Endothelial cell of umbilical vein (primary cell): ENCODE measurements at regions of chr1 and their contacts with region 1.

Region 1: GRCh38 chr1:81800695-81801650 is at the start of gene ADGRL2:
- DNase-seq: peak; percentile 91
- H3K4me3 ChIP-seq: peak within 1 kb of the TSS; percentile 71 to 99 (median 89)
- H3K27ac ChIP-seq: peak within 1 kb of the TSS; percentile 79
- H3K4me1 ChIP-seq: peaks cover 10% of the 10 kb centered on the region
- H3K27me3 ChIP-seq: no peaks in the 10 kb centered on the region
- CTCF ChIP-seq: no peak
- POLR2A ChIP-seq: no peak
- total RNA-seq, gene ADGRL2: 40.0 and 46.1 TPM in 2 replicates

Region 2: GRCh38 chr1:81414488-81415015 is 386.4 kb before region 1 on chr1:
- CTCF ChIA-PET with region 1: interaction called, 5 read pairs
- POLR2A ChIA-PET with region 1: no interaction called
- dilution Hi-C with region 1: no loop called
- intact Hi-C with region 1: loop called (anchors 1 kb)
- DNase-seq: peak; percentile 66
- H3K4me3 ChIP-seq: no peak overlapping the region
- H3K27ac ChIP-seq: no peak overlapping the region
- H3K4me1 ChIP-seq: peaks cover 8% of the 10 kb centered on the region
- H3K27me3 ChIP-seq: no peaks in the 10 kb centered on the region
- CTCF ChIP-seq: peak; percentile 80
- POLR2A ChIP-seq: no peak

Region 3: DNA sequence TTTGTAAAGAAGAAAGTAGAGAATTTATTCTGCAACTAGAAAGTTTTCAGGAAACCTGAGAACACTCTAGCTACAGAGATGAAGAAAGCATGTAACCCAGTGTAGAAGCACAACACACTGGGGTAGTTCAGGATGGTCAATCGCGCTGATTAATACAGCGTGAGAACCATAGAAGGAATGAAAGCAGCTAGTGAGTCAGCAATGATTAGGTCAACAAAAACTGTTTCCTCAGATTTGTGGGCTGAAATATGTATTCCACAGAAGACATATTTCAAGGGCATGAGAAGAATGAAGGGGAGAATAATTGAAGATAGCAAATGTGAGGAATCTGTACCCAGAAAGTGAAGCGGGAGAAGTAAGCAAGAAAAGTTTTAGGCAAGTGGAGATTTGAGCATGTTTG is 98.1 kb before region 1 on chr1:
- CTCF ChIA-PET with region 1: interaction called, 3 read pairs
- POLR2A ChIA-PET with region 1: no interaction called
- dilution Hi-C with region 1: no loop called
- intact Hi-C with region 1: loop called (anchors 1 kb)
- DNase-seq: peak; percentile 96
- H3K4me3 ChIP-seq: peak overlapping the region in 1 of 3 experiments; percentile 23
- H3K27ac ChIP-seq: peak overlapping the region; percentile 100
- H3K4me1 ChIP-seq: peaks cover 42% of the 10 kb centered on the region
- H3K27me3 ChIP-seq: no peaks in the 10 kb centered on the region
- CTCF ChIP-seq: no peak
- POLR2A ChIP-seq: no peak

Region 4: GRCh38 chr1:82401116-82401515 is 600.1 kb after region 1 on chr1:
- CTCF ChIA-PET with region 1: no interaction called
- POLR2A ChIA-PET with region 1: no interaction called
- dilution Hi-C with region 1: no loop called
- intact Hi-C with region 1: loop called (anchors 5 kb)
- DNase-seq: peak; percentile 67
- H3K4me3 ChIP-seq: no peak overlapping the region
- H3K27ac ChIP-seq: peak overlapping the region; percentile 68
- H3K4me1 ChIP-seq: peaks cover 37% of the 10 kb centered on the region
- H3K27me3 ChIP-seq: no peaks in the 10 kb centered on the region
- CTCF ChIP-seq: no peak
- POLR2A ChIP-seq: no peak

Region 5: DNA sequence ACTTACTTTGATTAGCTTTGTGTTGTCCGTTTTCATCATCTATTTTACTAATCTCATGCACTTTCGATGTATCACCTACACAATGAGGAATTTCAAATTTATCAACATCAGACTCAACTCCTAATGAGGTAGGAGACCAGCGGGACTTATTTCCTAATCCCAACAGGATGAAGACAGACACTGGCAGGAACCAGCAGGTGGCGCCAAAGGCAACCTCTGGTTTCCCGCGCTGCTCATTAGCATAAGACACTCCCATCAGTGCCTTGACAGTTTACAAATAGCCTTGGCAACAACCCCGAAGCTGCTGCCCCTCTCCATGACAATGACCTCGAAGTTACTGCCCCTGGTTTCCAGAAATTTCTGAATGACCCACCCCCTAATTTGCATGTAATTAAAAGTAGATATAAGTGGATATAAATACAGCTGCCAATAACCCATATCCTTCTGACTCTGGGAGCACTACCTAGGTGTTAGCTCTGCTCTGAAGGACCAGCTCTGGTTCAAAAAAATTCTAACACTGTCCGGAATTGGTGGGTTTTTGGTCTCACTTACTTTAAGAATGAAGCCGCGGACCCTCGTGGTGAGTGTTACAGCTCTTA is 974.5 kb after region 1 on chr1:
- CTCF ChIA-PET with region 1: no interaction called
- POLR2A ChIA-PET with region 1: no interaction called
- dilution Hi-C with region 1: no loop called
- intact Hi-C with region 1: loop called (anchors 10 kb)
- DNase-seq: peak; percentile 59
- H3K4me3 ChIP-seq: no peak overlapping the region
- H3K27ac ChIP-seq: no peak overlapping the region
- H3K4me1 ChIP-seq: no peaks in the 10 kb centered on the region
- H3K27me3 ChIP-seq: no peaks in the 10 kb centered on the region
- CTCF ChIP-seq: peak; percentile 62 to 66
- POLR2A ChIP-seq: no peak